ENCODE measurements at regions of chr9 and their contacts with region 1.

Region 1: DNA sequence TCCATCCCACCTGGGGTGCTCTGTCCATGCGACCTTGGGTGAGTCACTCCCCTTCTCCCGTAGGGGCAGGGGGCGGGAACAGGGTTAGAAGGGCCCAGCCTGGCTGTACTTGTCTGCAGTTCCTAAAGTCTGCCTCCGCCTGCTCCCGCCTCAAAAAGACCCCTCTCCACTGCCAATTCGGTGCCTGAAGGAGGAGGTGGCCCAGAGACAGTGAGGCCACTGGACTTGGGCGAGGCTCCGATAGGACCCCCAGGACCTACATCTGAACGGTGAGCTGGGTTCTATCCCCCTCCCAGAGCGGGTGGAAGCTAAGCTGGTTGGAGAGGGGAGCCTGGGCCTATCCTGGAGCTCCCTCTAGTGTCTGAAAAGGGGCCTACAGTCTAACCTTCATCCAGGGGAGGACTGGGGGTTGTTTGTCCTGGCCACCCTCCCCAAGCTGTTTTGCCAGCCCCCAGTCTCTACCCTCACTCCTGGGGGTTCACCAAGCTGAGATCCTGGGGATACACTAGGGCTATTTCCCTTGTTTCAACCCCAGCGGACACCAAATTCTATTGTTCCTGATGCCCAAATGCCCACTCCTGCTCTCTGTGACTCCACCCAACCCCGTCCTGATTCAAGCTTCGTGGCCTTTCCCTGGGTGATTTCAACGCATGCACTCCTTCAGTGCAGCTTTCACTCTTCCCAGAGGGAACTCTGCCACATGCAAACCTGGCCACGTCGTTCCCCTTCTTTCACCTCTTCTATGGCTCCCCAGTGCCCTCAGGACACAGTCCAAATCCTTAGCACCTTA is 6.1 kb upstream of the CRB2 start:
- DNase-seq: peak; percentile 56
- ATAC-seq: peak; percentile 92
- H3K4me3 Mint-ChIP-seq: peak overlapping the region; percentile 24
- H3K27ac Mint-ChIP-seq: peak overlapping the region; percentile 64
- H3K4me1 Mint-ChIP-seq: peaks cover 17% of the 10 kb centered on the region
- H3K27me3 Mint-ChIP-seq: no peaks in the 10 kb centered on the region
- CTCF ChIP-seq: no peak

Region 2: GRCh38 chr9:122464633-122465567 is 885.0 kb before region 1 on chr9:
- CTCF ChIA-PET with region 1: no interaction called
- POLR2A ChIA-PET with region 1: no interaction called
- intact Hi-C with region 1: loop called (anchors 10 kb)
- DNase-seq: peak; percentile 19
- ATAC-seq: peak; percentile 81
- H3K4me3 Mint-ChIP-seq: peak overlapping the region; percentile 84
- H3K27ac Mint-ChIP-seq: peak overlapping the region; percentile 70
- H3K4me1 Mint-ChIP-seq: peaks cover 14% of the 10 kb centered on the region
- H3K27me3 Mint-ChIP-seq: peaks cover 32% of the 10 kb centered on the region
- CTCF ChIP-seq: peak; percentile 28

Region 3: DNA sequence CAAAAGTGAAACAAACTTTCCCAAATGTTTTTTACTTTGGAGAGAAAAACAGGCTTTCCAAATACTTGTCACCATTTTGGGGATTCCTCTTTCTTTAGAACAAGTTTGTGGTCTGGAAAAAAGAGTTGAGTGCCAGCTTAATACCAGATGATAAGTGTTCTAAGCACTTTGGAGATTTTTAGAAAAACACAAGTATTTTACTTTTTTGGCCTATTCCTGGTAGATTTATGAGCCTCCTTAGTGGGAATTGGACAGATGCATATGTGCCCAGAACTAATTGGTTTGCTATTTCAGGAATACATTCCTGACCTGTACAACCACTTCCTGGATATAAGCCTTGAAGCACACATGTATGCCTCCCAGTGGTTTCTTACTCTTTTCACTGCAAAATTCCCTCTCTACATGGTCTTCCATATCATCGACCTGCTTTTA is 275.9 kb before region 1 on chr9:
- CTCF ChIA-PET with region 1: interaction called, 41 read pairs
- POLR2A ChIA-PET with region 1: interaction called, 3 read pairs
- intact Hi-C with region 1: no loop called
- DNase-seq: no peak
- ATAC-seq: no peak
- H3K4me3 Mint-ChIP-seq: no peak overlapping the region
- H3K27ac Mint-ChIP-seq: no peak overlapping the region
- H3K4me1 Mint-ChIP-seq: peaks cover 17% of the 10 kb centered on the region
- H3K27me3 Mint-ChIP-seq: no peaks in the 10 kb centered on the region
- CTCF ChIP-seq: no peak

Region 4: GRCh38 chr9:123091459-123091858 is 258.4 kb before region 1 on chr9:
- CTCF ChIA-PET with region 1: interaction called, 51 read pairs
- POLR2A ChIA-PET with region 1: interaction called, 15 read pairs
- intact Hi-C with region 1: no loop called
- DNase-seq: no peak
- ATAC-seq: no peak
- H3K4me3 Mint-ChIP-seq: no peak overlapping the region
- H3K27ac Mint-ChIP-seq: no peak overlapping the region
- H3K4me1 Mint-ChIP-seq: peaks cover 75% of the 10 kb centered on the region
- H3K27me3 Mint-ChIP-seq: no peaks in the 10 kb centered on the region
- CTCF ChIP-seq: no peak

Region 5: DNA sequence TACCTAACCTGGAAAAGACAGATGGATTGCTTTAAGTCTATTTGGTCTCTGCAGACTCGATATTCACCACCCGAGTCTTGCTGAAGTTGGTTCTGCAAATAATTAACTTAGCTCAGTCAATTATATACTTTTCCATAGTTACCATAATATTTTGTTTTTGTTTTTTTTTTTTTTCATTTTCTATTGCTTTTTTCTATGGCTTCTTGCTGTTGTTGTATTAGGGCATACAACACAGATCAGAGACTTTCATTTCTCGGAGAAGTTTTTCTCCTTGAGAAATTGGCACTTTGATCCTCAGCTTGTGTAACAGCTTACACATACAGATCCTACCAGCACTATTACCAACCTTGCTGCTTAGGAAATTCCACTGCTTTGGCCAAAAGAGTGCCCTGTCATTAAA is 228.4 kb before region 1 on chr9:
- CTCF ChIA-PET with region 1: interaction called, 13 read pairs
- POLR2A ChIA-PET with region 1: no interaction called
- intact Hi-C with region 1: no loop called
- DNase-seq: no peak
- ATAC-seq: no peak
- H3K4me3 Mint-ChIP-seq: no peak overlapping the region
- H3K27ac Mint-ChIP-seq: no peak overlapping the region
- H3K4me1 Mint-ChIP-seq: peaks cover 7% of the 10 kb centered on the region
- H3K27me3 Mint-ChIP-seq: no peaks in the 10 kb centered on the region
- CTCF ChIP-seq: no peak

Region 6: GRCh38 chr9:123187131-123187530 is 162.8 kb before region 1 on chr9:
- CTCF ChIA-PET with region 1: no interaction called
- POLR2A ChIA-PET with region 1: no interaction called
- intact Hi-C with region 1: no loop called
- DNase-seq: no peak
- ATAC-seq: peak; percentile 42
- H3K4me3 Mint-ChIP-seq: no peak overlapping the region
- H3K27ac Mint-ChIP-seq: peak overlapping the region; percentile 69
- H3K4me1 Mint-ChIP-seq: peaks cover 44% of the 10 kb centered on the region
- H3K27me3 Mint-ChIP-seq: no peaks in the 10 kb centered on the region
- CTCF ChIP-seq: no peak

Region 7: DNA sequence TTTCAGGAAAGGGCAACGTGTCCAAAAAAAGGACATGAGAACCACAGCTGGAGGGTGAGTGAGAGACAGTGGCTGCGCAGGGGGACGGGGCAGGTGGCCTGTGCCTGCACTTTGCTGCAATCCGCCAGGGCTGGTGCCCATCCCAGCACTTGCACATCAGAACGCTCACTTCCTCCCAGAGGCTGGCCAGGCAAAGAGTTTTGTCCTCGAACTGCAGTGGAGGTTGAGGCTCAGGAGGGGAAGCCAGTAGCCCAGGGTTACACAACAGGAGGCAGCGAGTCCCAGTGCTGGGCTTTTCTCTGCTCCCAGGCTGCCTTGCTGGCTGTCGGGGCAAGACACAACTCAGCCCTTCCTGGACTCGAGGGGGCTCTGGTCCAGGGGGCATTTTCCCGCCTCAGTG is 39.2 kb after region 1 on chr9:
- CTCF ChIA-PET with region 1: interaction called, 20 read pairs
- POLR2A ChIA-PET with region 1: no interaction called
- intact Hi-C with region 1: loop called (anchors 1 kb)
- DNase-seq: no peak
- ATAC-seq: no peak
- H3K4me3 Mint-ChIP-seq: no peak overlapping the region
- H3K27ac Mint-ChIP-seq: no peak overlapping the region
- H3K4me1 Mint-ChIP-seq: no peaks in the 10 kb centered on the region
- H3K27me3 Mint-ChIP-seq: no peaks in the 10 kb centered on the region
- CTCF ChIP-seq: no peak

Measured in activated B cell treated with CpG ODN at 0.5 μM for 24 hours (primary cell).